ENCODE measurements at regions of chr16 and their contacts with region 1.

Region 1: DNA sequence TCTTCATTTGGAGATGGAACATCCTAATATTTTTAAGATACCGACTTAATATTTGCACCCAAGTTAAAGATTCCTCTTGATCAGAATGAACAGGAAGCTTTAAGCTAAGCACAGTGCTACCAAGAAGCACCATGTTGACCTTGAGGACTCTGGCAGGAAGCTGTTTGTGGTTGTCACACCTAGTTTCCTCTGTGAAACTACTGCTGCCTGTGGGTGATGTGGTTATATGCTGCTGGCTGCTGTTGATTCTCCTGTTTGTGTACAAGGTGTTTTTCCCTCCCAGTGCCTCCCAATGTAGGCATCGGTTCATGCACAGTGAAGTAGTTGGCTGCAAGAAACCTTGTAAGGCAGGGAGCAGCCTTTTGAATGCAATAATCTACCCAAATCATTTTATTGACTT is 23.4 kb downstream of the RBL2 start:
- DNase-seq: peak; percentile 85 to 93 (median 89)
- H3K4me3 ChIP-seq: peak overlapping the region; percentile 34 to 38
- H3K4me3 Mint-ChIP-seq: peak overlapping the region; percentile 78 to 95 (median 88)
- H3K27ac ChIP-seq: peak overlapping the region; percentile 42
- H3K27ac Mint-ChIP-seq: peak overlapping the region; percentile 88 to 99 (median 94)
- H3K4me1 ChIP-seq: peaks cover 92% of the 10 kb centered on the region
- H3K4me1 Mint-ChIP-seq: peaks cover 61 to 96% (median 80%) of the 10 kb centered on the region in 4 donors
- H3K27me3 ChIP-seq: no peaks in the 10 kb centered on the region
- H3K27me3 Mint-ChIP-seq: no peaks in the 10 kb centered on the region

Region 2: DNA sequence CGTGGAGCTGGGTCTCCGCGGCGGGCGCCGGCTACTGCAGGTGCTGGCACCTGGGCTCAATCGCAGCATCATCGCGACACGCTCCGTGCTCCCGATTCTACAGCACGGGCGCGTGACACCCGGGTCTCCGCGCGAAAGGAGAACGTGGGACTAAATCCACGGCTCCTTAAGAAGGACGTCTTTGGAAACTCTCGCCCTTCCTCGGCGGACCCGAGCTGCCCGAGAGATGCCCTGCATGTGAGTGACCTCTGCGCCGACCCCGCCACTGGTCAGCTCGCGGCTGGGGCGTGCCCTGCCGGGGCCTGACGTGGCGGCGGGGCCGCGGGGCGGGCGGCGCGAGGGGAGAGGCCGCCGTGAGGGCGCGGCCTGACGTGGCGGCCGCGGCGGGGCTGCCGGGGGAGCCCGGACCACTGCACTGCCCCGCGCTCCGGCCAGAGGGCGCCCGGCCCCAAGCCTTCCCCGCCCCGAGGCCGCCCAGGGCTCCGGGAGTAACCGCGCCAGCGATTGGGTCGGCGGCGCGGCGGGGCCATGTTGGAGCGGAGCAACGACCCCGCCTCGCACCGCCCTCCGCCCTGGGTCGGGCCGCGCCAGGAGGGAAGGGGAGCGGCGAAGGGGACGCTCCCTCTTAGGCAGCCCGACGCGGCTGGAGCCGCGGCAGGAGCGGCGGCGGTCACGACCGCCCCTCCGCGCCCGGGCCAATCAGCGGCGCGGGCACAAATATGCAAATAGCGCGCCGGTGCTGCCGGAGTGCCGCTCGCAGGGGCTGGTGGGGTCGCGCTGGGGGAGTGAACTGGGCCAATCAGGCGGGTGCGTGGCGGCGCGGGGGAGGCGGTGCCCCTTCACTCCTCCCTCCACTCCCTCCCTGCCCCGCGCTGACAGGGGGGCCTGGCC is 327.3 kb before region 1 on chr16:
- CTCF ChIA-PET with region 1: no interaction called
- POLR2A ChIA-PET with region 1: interaction called, 3 read pairs
- intact Hi-C with region 1: loop called (anchors 2 kb)
- DNase-seq: peak; percentile 95 to 96 (median 96)
- H3K4me3 ChIP-seq: peak overlapping the region; percentile 36 to 64
- H3K4me3 Mint-ChIP-seq: peak overlapping the region; percentile 74 to 91 (median 84)
- H3K27ac ChIP-seq: peak overlapping the region; percentile 55
- H3K27ac Mint-ChIP-seq: peak overlapping the region; percentile 80 to 96 (median 86)
- H3K4me1 ChIP-seq: peaks cover 8% of the 10 kb centered on the region
- H3K4me1 Mint-ChIP-seq: peaks cover 9 to 19% (median 14%) of the 10 kb centered on the region in 4 donors
- H3K27me3 ChIP-seq: no peaks in the 10 kb centered on the region
- H3K27me3 Mint-ChIP-seq: no peaks in the 10 kb centered on the region

Region 3: GRCh38 chr16:53372992-53373871 is 84.4 kb before region 1 on chr16:
- CTCF ChIA-PET with region 1: no interaction called
- POLR2A ChIA-PET with region 1: interaction called, 15 read pairs
- intact Hi-C with region 1: loop called (anchors 1 kb)
- DNase-seq: peak; percentile 74 to 84 (median 81)
- H3K4me3 ChIP-seq: peak overlapping the region; percentile 52 to 59
- H3K4me3 Mint-ChIP-seq: peak overlapping the region in 1 of 8 donors; percentile 87
- H3K27ac ChIP-seq: peak overlapping the region; percentile 27
- H3K27ac Mint-ChIP-seq: peak overlapping the region; percentile 71 to 91 (median 88)
- H3K4me1 ChIP-seq: peaks cover 10% of the 10 kb centered on the region
- H3K4me1 Mint-ChIP-seq: peaks cover 14 to 21% (median 18%) of the 10 kb centered on the region in 4 donors
- H3K27me3 ChIP-seq: no peaks in the 10 kb centered on the region
- H3K27me3 Mint-ChIP-seq: peaks cover 0 to 3% of the 10 kb centered on the region in 2 donors

Region 4: GRCh38 chr16:53482123-53482522 is 24.5 kb after region 1 on chr16:
- CTCF ChIA-PET with region 1: no interaction called
- POLR2A ChIA-PET with region 1: interaction called, 16 read pairs
- intact Hi-C with region 1: no loop called
- DNase-seq: no peak
- H3K4me3 ChIP-seq: no peak overlapping the region
- H3K4me3 Mint-ChIP-seq: no peak overlapping the region
- H3K27ac ChIP-seq: no peak overlapping the region
- H3K27ac Mint-ChIP-seq: peak overlapping the region in 5 of 7 donors; percentile 19 to 65 (median 44)
- H3K4me1 ChIP-seq: peaks cover 12% of the 10 kb centered on the region
- H3K4me1 Mint-ChIP-seq: peaks cover 13 to 35% (median 22%) of the 10 kb centered on the region in 4 donors
- H3K27me3 ChIP-seq: no peaks in the 10 kb centered on the region
- H3K27me3 Mint-ChIP-seq: no peaks in the 10 kb centered on the region

Region 5: GRCh38 chr16:53503270-53503923 is 45.7 kb after region 1 on chr16:
- CTCF ChIA-PET with region 1: interaction called, 14 read pairs
- POLR2A ChIA-PET with region 1: interaction called, 276 read pairs
- intact Hi-C with region 1: loop called (anchors 1 kb)
- DNase-seq: peak; percentile 99 to 100 (median 100)
- H3K4me3 ChIP-seq: peak overlapping the region; percentile 40 to 83
- H3K4me3 Mint-ChIP-seq: peak overlapping the region; percentile 90 to 95 (median 92)
- H3K27ac ChIP-seq: peak overlapping the region; percentile 76
- H3K27ac Mint-ChIP-seq: peak overlapping the region; percentile 87 to 94 (median 91)
- H3K4me1 ChIP-seq: peaks cover 52% of the 10 kb centered on the region
- H3K4me1 Mint-ChIP-seq: peaks cover 38 to 61% (median 50%) of the 10 kb centered on the region in 4 donors
- H3K27me3 ChIP-seq: no peaks in the 10 kb centered on the region
- H3K27me3 Mint-ChIP-seq: no peaks in the 10 kb centered on the region

Region 6: GRCh38 chr16:53518550-53519416 is 61.1 kb after region 1 on chr16:
- CTCF ChIA-PET with region 1: interaction called, 5 read pairs
- POLR2A ChIA-PET with region 1: interaction called, 12 read pairs
- intact Hi-C with region 1: no loop called
- DNase-seq: peak; percentile 83 to 89 (median 86)
- H3K4me3 ChIP-seq: peak overlapping the region; percentile 17 to 45
- H3K4me3 Mint-ChIP-seq: peak overlapping the region; percentile 79 to 92 (median 85)
- H3K27ac ChIP-seq: peak overlapping the region; percentile 43
- H3K27ac Mint-ChIP-seq: peak overlapping the region; percentile 85 to 97 (median 94)
- H3K4me1 ChIP-seq: peaks cover 43% of the 10 kb centered on the region
- H3K4me1 Mint-ChIP-seq: peaks cover 52 to 83% (median 59%) of the 10 kb centered on the region in 4 donors
- H3K27me3 ChIP-seq: no peaks in the 10 kb centered on the region
- H3K27me3 Mint-ChIP-seq: no peaks in the 10 kb centered on the region